ENCODE measurements at regions of chr3 and their contacts with region 1.

Region 1: GRCh38 chr3:84547971-84548970 is 410.5 kb upstream of the CADM2 start:
- DNase-seq: peak in 2 of 10 donors; percentile 3 to 43
- H3K4me3 ChIP-seq: peak overlapping the region in 4 of 59 donors; percentile 11 to 28 (median 17)
- H3K27ac ChIP-seq: no peak overlapping the region
- H3K27me3 ChIP-seq: no peaks in the 10 kb centered on the region
- CTCF ChIP-seq: peak in 55 of 56 donors; percentile 16 to 81 (median 63)

Region 2: DNA sequence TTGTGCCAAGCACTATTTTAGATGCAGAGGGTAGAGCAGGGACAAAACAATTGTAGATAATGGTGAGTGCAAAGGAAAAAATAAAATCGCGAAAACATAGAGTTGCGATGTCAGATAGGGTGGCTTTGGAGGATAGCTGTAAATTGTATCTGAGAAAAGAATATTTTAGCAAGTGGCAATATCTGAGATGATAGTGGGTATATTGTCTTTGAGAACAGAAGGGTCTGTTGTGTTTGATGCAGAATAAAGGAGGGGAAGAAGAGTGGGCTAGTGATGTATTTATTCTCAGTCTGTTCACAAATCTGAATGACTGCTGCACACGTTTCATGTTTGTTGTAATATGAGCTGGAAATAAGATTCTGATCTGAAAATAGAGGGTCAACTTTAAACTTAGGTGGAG is 807.3 kb after region 1 on chr3:
- intact Hi-C with region 1: loop called in 1 of 2 experiments (anchors 5 kb)
- DNase-seq: no peak
- H3K4me3 ChIP-seq: peak overlapping the region in 47 of 59 donors; percentile 2 to 60 (median 37)
- H3K27ac ChIP-seq: peak overlapping the region in 57 of 59 donors; percentile 7 to 88 (median 73)
- H3K27me3 ChIP-seq: no peaks in the 10 kb centered on the region
- CTCF ChIP-seq: peak in 2 of 56 donors; percentile 9 to 25

Region 3: DNA sequence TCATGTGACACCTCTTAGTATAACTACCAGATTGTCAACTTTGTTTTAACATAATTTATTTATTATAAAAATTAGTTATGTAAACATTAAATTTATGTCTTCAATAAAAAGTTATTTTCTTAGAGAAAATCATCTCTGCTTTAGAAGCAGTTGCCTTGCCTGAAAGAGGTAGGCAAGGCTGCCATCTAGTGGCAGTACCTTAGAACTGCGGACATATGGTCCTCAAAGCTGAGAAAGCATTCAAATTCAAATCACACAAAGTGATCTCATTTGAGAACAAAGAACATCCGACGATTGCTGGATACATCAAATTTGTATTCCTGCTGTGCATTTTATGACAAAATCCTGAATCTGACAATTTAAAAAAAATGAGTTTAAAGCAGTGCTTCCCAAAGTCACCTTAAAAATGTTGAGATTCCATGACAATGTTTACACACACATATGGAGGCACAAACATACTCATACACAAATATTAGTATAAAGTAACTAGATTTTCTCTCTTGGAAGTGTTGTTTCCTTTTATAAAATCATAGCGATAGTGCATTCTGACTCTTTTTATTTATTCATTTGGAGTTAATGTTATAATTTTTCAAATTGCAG is 1027.9 kb after region 1 on chr3:
- intact Hi-C with region 1: loop called in 1 of 2 experiments (anchors 5 kb)
- DNase-seq: peak; percentile 58 to 93 (median 80)
- H3K4me3 ChIP-seq: peak overlapping the region in 40 of 59 donors; percentile 1 to 55 (median 28)
- H3K27ac ChIP-seq: peak overlapping the region; percentile 0 to 94 (median 81)
- H3K27me3 ChIP-seq: no peaks in the 10 kb centered on the region
- CTCF ChIP-seq: peak; percentile 80 to 98 (median 92)